Gastrocnemius medialis (tissue), 4 donors: ENCODE measurements at regions of chr12 and their contacts with region 1.

Region 1: DNA sequence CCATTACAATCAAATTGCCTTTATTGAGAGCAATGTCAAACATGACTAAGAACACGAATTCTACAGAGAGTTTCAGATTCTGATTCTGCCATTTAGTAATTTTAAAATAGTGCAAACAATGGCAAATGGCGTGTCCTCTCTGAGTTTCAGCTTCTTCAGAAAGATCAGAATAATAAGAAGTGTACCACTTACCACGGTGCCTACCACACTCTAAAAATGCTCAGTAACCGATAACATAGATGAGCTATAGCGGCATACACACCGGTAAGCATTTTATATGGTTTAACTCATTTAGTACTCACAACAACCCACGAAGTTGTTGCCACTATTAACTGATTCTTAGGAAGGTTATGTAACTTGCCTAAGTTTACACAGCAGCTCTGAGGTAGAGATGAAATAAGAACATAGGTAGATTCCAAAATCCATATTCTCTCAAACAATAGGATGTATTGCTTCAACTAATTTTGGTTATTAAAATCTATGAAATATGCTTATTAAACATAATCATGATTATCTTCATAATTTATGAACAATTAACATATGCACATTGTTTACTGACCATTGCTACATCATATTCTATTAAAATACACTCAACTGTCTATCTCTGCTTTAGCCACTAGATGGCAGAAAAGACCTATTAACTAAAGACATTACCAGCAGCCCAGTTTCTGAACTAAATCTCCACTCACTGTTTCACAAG is 38.3 kb downstream of the SLC6A15 start:
- DNase-seq: no peak
- ATAC-seq: peak in 1 of 2 donors; percentile 63
- H3K4me3 ChIP-seq: no peak overlapping the region
- H3K27ac ChIP-seq: no peak overlapping the region
- H3K4me1 ChIP-seq: no peaks in the 10 kb centered on the region
- H3K27me3 ChIP-seq: no peaks in the 10 kb centered on the region
- CTCF ChIP-seq: peak; percentile 42 to 73 (median 66)
- POLR2A ChIP-seq: no peak

Region 2: DNA sequence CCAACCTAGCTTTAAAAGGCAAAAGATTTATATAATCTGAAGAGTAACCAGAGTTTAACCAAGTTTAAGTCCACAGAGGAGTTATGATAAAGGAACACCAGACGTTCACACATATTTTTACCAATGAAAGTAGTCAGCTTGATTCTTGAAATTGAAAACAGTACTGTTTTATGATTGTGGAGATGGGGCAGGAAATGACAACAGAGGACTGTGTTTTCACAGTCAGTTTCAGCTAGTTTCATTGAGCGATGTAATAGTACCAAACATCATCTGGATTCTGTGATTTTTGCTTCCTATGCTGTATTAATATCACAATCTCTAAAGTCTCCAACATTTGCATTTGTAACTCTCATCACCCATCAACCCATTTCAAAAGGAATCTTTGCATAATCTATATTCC is 72.5 kb after region 1 on chr12:
- in situ Hi-C with region 1: no loop called
- intact Hi-C with region 1: no loop called
- DNase-seq: no peak
- ATAC-seq: no peak
- H3K4me3 ChIP-seq: no peak overlapping the region
- H3K27ac ChIP-seq: no peak overlapping the region
- H3K4me1 ChIP-seq: no peaks in the 10 kb centered on the region
- H3K27me3 ChIP-seq: no peaks in the 10 kb centered on the region
- CTCF ChIP-seq: no peak
- POLR2A ChIP-seq: no peak

Region 3: GRCh38 chr12:85029456-85029855 is 155.2 kb after region 1 on chr12:
- in situ Hi-C with region 1: loop called (anchors 5 to 25 kb)
- intact Hi-C with region 1: loop called (anchors 5 kb)
- DNase-seq: no peak
- ATAC-seq: no peak
- H3K4me3 ChIP-seq: no peak overlapping the region
- H3K27ac ChIP-seq: no peak overlapping the region
- H3K4me1 ChIP-seq: no peaks in the 10 kb centered on the region
- H3K27me3 ChIP-seq: no peaks in the 10 kb centered on the region
- CTCF ChIP-seq: peak in 3 of 5 experiments; percentile 18 to 36 (median 33)
- POLR2A ChIP-seq: no peak

Region 4: DNA sequence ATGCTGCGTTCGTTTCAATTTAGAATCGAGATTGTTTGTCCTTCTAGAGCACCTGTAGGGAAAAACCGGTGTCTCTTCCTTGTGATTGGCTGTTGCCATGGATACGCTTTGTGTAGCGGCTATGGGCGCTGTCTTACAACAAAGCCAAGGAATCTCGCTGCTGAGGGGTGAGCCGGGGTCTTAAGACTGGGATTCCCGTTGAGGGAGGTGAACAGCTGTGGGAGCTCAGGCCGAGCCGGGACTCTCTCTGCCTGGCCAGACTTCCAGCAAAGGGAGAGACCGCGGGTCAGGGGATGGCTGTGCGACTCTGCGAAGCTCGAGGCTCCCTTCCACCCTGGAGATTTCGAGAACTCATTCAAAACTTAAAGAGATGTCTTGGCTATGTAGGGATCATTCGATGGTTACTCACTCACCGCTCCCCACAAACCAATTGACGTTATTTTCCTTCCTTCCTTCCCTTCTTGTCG is 162.0 kb after region 1 on chr12 and contains the starts of genes LRRIQ1 and TSPAN19:
- in situ Hi-C with region 1: loop called in 1 of 4 experiments (anchors 25 kb)
- intact Hi-C with region 1: loop called (anchors 5 kb)
- DNase-seq: peak; percentile 28 to 36
- ATAC-seq: peak; percentile 87 to 91
- H3K4me3 ChIP-seq: peak within 1 kb of the TSS; percentile 51 to 61 (median 58)
- H3K27ac ChIP-seq: no peak within 1 kb of the TSS
- H3K4me1 ChIP-seq: peaks cover 0 to 4% of the 10 kb centered on the region in 2 donors
- H3K27me3 ChIP-seq: no peaks in the 10 kb centered on the region
- CTCF ChIP-seq: no peak
- POLR2A ChIP-seq: no peak
- total RNA-seq, gene LRRIQ1: not detected
- total RNA-seq, gene TSPAN19: not detected